CD4-positive, alpha-beta T cell (primary cell): ENCODE measurements at regions of chrX and their contacts with region 1.

Region 1: DNA sequence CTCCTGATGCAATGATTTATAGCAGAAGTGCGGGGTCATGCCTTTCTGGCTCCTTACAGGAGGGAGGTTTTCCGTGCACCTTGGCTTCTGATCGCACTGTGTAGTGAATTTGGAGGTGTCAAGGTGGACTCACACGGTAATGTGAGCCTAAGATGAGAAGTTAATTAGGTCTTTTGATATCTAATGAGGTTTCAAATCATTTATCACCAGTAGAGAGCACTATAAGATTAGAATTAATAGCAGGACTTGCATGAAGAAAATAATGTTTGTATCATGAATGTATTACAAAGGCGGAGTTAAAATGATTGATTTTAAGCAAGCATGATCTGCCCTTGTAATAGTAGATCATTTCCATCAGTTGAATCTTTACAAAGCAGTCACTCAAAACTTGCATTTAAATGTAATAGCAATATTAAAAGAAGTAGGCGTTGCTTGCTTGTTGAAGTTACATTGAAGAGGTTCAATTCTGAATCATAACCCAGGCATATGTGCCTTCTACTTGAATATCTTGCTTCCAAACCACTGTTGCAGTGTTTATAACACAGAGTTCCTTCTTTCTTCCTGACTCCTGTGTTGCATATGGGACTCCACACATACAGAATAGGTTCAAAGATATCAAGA is 152.1 kb downstream of the FMR1NB start:
- DNase-seq: peak in 3 of 14 experiments; percentile 25 to 35 (median 32)
- ATAC-seq: no peak
- H3K4me3 ChIP-seq: no peak overlapping the region
- H3K4me3 Mint-ChIP-seq: no peak overlapping the region
- H3K27ac ChIP-seq: no peak overlapping the region
- H3K27ac Mint-ChIP-seq: no peak overlapping the region
- H3K4me1 ChIP-seq: no peaks in the 10 kb centered on the region
- H3K4me1 Mint-ChIP-seq: peaks cover 5% of the 10 kb centered on the region
- H3K27me3 ChIP-seq: no peaks in the 10 kb centered on the region
- H3K27me3 Mint-ChIP-seq: no peaks in the 10 kb centered on the region
- CTCF ChIP-seq: peak; percentile 46

Region 2: DNA sequence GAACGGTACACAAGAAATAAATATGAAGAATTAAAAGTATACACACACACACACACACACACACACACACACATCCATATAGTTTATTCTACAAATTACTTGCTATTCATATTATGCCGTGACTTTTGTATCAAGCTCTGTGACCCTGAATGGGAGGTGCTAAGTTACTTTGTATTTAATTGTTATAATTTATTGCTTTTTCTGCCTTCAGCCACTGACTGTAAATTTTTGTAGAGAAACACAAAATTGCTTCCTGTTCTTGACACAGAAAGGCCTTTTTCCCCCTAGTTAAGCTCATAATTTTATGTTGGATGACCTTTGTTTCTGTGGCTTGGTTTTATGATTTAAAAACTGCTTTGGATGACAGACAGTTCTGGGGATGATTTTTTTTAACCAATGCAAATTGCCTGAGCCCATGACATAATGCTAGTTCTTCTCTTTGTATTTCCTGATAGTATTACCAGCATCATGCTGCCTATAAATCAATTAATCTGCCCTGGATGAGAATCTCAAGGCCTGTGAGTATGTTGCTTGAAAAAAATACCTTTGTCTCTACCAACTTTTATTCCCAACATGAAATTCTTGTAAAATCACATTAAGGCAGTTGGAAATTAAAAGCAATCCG is 12.1 kb before region 1 on chrX:
- CTCF ChIA-PET with region 1: no interaction called
- POLR2A ChIA-PET with region 1: no interaction called
- intact Hi-C with region 1: loop called in 1 of 2 experiments (anchors 2 kb)
- DNase-seq: no peak
- ATAC-seq: no peak
- H3K4me3 ChIP-seq: no peak overlapping the region
- H3K4me3 Mint-ChIP-seq: no peak overlapping the region
- H3K27ac ChIP-seq: no peak overlapping the region
- H3K27ac Mint-ChIP-seq: no peak overlapping the region
- H3K4me1 ChIP-seq: no peaks in the 10 kb centered on the region
- H3K4me1 Mint-ChIP-seq: no peaks in the 10 kb centered on the region
- H3K27me3 ChIP-seq: no peaks in the 10 kb centered on the region
- H3K27me3 Mint-ChIP-seq: no peaks in the 10 kb centered on the region
- CTCF ChIP-seq: no peak

Region 3: DNA sequence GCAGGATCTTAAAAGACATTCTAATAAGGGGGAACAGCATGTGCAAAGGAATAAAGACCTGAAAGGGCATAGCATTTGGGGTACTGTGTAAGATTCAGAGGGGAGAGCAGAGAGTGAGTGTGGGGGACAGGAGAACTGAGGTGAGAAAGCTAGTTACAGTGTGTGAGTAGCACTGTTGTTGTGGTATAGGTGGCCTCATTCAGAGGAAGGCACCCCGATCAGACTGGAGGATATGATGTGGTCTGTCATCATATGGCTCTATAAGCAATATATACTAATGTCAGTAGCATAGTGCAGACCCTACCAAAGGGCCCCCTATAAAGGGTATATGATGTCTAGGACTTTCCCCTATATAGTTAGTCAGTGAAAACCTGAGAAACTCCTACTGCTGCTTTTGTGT is 23.8 kb after region 1 on chrX:
- CTCF ChIA-PET with region 1: no interaction called
- POLR2A ChIA-PET with region 1: no interaction called
- intact Hi-C with region 1: no loop called
- DNase-seq: no peak
- ATAC-seq: no peak
- H3K4me3 ChIP-seq: no peak overlapping the region
- H3K4me3 Mint-ChIP-seq: no peak overlapping the region
- H3K27ac ChIP-seq: no peak overlapping the region
- H3K27ac Mint-ChIP-seq: no peak overlapping the region
- H3K4me1 ChIP-seq: no peaks in the 10 kb centered on the region
- H3K4me1 Mint-ChIP-seq: no peaks in the 10 kb centered on the region
- H3K27me3 ChIP-seq: no peaks in the 10 kb centered on the region
- H3K27me3 Mint-ChIP-seq: no peaks in the 10 kb centered on the region
- CTCF ChIP-seq: no peak

Region 4: DNA sequence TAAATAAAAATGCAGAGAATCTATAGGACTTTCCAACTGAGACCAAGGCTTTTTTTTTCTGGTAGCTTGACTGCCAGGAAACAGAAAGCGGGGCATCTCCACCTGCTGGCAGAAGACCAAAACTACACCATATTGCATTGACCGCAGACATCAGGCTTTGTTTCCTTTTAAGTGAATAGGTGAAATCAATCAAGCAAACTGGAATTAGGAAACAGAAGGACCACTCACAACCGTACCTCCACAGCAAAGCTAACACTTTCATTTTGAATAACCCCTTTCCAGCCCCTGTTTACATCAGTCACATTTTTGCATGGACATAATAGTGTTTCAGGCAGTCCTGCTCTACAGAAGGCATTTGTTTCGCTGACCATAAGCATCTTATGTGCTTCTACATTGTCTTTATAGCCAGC is 1153.7 kb after region 1 on chrX:
- CTCF ChIA-PET with region 1: interaction called, 3 read pairs
- POLR2A ChIA-PET with region 1: no interaction called
- intact Hi-C with region 1: loop called in 1 of 2 experiments (anchors 2 kb)
- DNase-seq: peak in 13 of 14 experiments; percentile 1 to 66 (median 32)
- ATAC-seq: no peak
- H3K4me3 ChIP-seq: no peak overlapping the region
- H3K4me3 Mint-ChIP-seq: no peak overlapping the region
- H3K27ac ChIP-seq: no peak overlapping the region
- H3K27ac Mint-ChIP-seq: no peak overlapping the region
- H3K4me1 ChIP-seq: no peaks in the 10 kb centered on the region
- H3K4me1 Mint-ChIP-seq: no peaks in the 10 kb centered on the region
- H3K27me3 ChIP-seq: no peaks in the 10 kb centered on the region
- H3K27me3 Mint-ChIP-seq: no peaks in the 10 kb centered on the region
- CTCF ChIP-seq: peak; percentile 59

Region 5: GRCh38 chrX:149470955-149471354 is 1337.7 kb after region 1 on chrX:
- CTCF ChIA-PET with region 1: interaction called, 3 read pairs
- POLR2A ChIA-PET with region 1: no interaction called
- intact Hi-C with region 1: loop called (anchors 1 to 2 kb)
- DNase-seq: peak; percentile 24 to 75 (median 48)
- ATAC-seq: peak; percentile 86
- H3K4me3 ChIP-seq: no peak overlapping the region
- H3K4me3 Mint-ChIP-seq: no peak overlapping the region
- H3K27ac ChIP-seq: no peak overlapping the region
- H3K27ac Mint-ChIP-seq: no peak overlapping the region
- H3K4me1 ChIP-seq: no peaks in the 10 kb centered on the region
- H3K4me1 Mint-ChIP-seq: peaks cover 4% of the 10 kb centered on the region
- H3K27me3 ChIP-seq: no peaks in the 10 kb centered on the region
- H3K27me3 Mint-ChIP-seq: peaks cover 7% of the 10 kb centered on the region
- CTCF ChIP-seq: peak; percentile 70